Tibial artery (tissue), 4 donors: ENCODE measurements at regions of chr13 and their contacts with region 1.

Region 1: GRCh38 chr13:24220086-24220703 is 59.7 kb downstream of the SPATA13 start:
- DNase-seq: peak in 1 of 2 donors; percentile 57
- H3K4me3 ChIP-seq: no peak overlapping the region
- H3K27ac ChIP-seq: no peak overlapping the region
- H3K4me1 ChIP-seq: peaks cover 0 to 16% (median 6%) of the 10 kb centered on the region in 4 donors
- H3K27me3 ChIP-seq: no peaks in the 10 kb centered on the region
- CTCF ChIP-seq: peak; percentile 61 to 89

Region 2: GRCh38 chr13:23921451-23921888 is 298.7 kb before region 1 on chr13:
- intact Hi-C with region 1: loop called (anchors 5 kb)
- DNase-seq: no peak
- H3K4me3 ChIP-seq: no peak overlapping the region
- H3K27ac ChIP-seq: no peak overlapping the region
- H3K4me1 ChIP-seq: no peaks in the 10 kb centered on the region
- H3K27me3 ChIP-seq: no peaks in the 10 kb centered on the region
- CTCF ChIP-seq: peak; percentile 34 to 42

Region 3: DNA sequence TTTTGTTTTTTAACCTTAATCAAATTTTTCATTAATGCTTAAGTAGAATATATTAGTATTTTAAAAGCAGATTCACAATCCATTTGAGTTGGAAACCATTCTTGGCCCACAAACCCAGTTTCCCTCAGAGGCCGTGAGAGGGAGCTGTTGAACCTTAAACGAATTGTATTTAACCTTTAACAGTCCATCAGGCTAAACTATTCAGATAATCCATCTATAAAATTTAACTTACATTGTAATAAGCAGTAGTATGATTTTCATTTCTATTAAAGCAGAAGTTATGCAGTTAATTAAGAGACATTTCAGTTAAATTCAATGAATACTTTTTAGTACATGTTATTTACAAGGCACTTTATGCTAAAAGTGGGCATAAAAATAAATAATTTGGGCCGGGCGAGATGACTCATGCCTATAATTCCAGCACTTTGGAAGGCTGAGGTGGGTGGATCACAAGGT is 199.8 kb before region 1 on chr13:
- intact Hi-C with region 1: loop called (anchors 2 kb)
- DNase-seq: peak in 1 of 2 donors; percentile 43
- H3K4me3 ChIP-seq: no peak overlapping the region
- H3K27ac ChIP-seq: no peak overlapping the region
- H3K4me1 ChIP-seq: peaks cover 0 to 6% (median 2%) of the 10 kb centered on the region in 4 donors
- H3K27me3 ChIP-seq: no peaks in the 10 kb centered on the region
- CTCF ChIP-seq: peak; percentile 71 to 84